GM12878 (cell line): ENCODE measurements at regions of chr2 and their contacts with region 1.

Region 1: GRCh38 chr2:177332041-177332991 is 60.3 kb upstream of the AGPS start:
- DNase-seq: peak; percentile 45
- ATAC-seq: peak; percentile 92
- H3K4me3 ChIP-seq: no peak overlapping the region
- H3K27ac ChIP-seq: no peak overlapping the region
- H3K4me1 ChIP-seq: no peaks in the 10 kb centered on the region
- H3K27me3 ChIP-seq: no peaks in the 10 kb centered on the region
- CTCF ChIP-seq: peak; percentile 55 to 79 (median 62)
- EP300 ChIP-seq: no peak
- POLR2A ChIP-seq: no peak
- RAD21 ChIP-seq: peak; percentile 90

Region 2: GRCh38 chr2:177239932-177240630 is 92.2 kb before region 1 on chr2:
- CTCF ChIA-PET with region 1: interaction called, 6 read pairs
- POLR2A ChIA-PET with region 1: no interaction called
- RAD21 ChIA-PET with region 1: interaction called, 6 read pairs
- SMC1A ChIA-PET with region 1: no interaction called
- in situ Hi-C with region 1: no loop called
- intact Hi-C with region 1: loop called (anchors 5 kb)
- DNase-seq: peak; percentile 47
- ATAC-seq: peak; percentile 86
- H3K4me3 ChIP-seq: no peak overlapping the region
- H3K27ac ChIP-seq: peak overlapping the region; percentile 0; the same call in 1 of the 2 replicates
- H3K4me1 ChIP-seq: peaks cover 22% of the 10 kb centered on the region
- H3K27me3 ChIP-seq: no peaks in the 10 kb centered on the region
- CTCF ChIP-seq: no peak
- EP300 ChIP-seq: no peak
- POLR2A ChIP-seq: no peak
- RAD21 ChIP-seq: no peak

Region 3: DNA sequence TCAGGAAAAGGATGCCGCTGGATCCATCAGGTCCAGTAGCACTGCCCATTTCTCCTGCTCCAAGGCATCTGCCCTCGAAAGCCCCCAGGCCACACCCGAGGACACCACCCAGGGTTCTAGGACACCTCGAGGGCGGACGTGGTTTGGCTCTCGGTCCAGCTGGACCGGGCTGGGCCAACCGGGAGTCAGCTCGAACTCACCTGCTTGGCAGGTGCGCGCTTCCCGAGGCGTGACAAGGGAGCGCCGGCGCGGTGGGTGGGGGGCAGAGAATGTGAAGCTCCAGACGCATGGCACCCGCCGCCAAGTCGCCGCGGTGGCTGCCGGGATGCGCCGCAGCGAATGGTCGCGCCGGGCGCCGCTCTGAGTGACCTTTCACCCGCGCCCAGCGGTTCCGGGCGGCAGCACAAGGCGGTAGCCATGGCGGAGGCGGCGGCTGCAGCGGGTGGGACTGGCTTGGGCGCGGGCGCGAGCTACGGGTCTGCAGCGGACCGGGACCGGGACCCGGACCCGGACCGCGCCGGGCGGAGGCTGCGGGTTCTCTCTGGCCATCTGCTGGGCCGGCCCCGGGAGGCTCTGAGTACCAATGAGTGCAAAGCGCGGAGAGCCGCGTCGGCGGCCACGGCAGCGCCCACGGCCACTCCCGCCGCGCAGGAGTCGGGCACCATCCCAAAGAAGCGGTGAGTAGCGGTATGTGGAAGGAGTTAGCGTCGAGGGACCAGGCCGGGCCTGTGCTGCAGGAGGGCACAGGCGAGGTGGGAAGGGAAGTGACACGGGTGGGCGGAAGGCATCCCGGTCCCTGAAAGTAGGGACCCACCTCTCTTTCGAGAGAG is 60.3 kb after region 1 on chr2 and contains the start of gene AGPS:
- CTCF ChIA-PET with region 1: interaction called, 25 read pairs
- POLR2A ChIA-PET with region 1: interaction called, 3 read pairs
- RAD21 ChIA-PET with region 1: interaction called, 6 read pairs
- SMC1A ChIA-PET with region 1: interaction called, 37 read pairs
- in situ Hi-C with region 1: no loop called
- intact Hi-C with region 1: no loop called
- DNase-seq: peak; percentile 30
- ATAC-seq: peak; percentile 92
- H3K4me3 ChIP-seq: peak within 1 kb of the TSS; percentile 91
- H3K27ac ChIP-seq: peak within 1 kb of the TSS; percentile 66
- H3K4me1 ChIP-seq: peaks cover 20% of the 10 kb centered on the region
- H3K27me3 ChIP-seq: no peaks in the 10 kb centered on the region
- CTCF ChIP-seq: no peak
- EP300 ChIP-seq: no peak
- POLR2A ChIP-seq: peak; percentile 94
- RAD21 ChIP-seq: no peak
- polyA plus RNA-seq, gene AGPS: 7.9 to 11.1 TPM

Region 4: GRCh38 chr2:177413703-177414102 is 81.4 kb after region 1 on chr2:
- CTCF ChIA-PET with region 1: interaction called, 273 read pairs
- POLR2A ChIA-PET with region 1: no interaction called
- RAD21 ChIA-PET with region 1: interaction called, 100 read pairs
- SMC1A ChIA-PET with region 1: interaction called, 208 read pairs
- in situ Hi-C with region 1: loop called (anchors 5 kb)
- intact Hi-C with region 1: loop called (anchors 1 kb)
- DNase-seq: no peak
- ATAC-seq: peak; percentile 69
- H3K4me3 ChIP-seq: no peak overlapping the region
- H3K27ac ChIP-seq: no peak overlapping the region
- H3K4me1 ChIP-seq: no peaks in the 10 kb centered on the region
- H3K27me3 ChIP-seq: no peaks in the 10 kb centered on the region
- CTCF ChIP-seq: no peak
- EP300 ChIP-seq: no peak
- POLR2A ChIP-seq: no peak
- RAD21 ChIP-seq: no peak

Region 5: GRCh38 chr2:177604271-177605065 is 272.2 kb after region 1 on chr2:
- CTCF ChIA-PET with region 1: interaction called, 55 read pairs
- POLR2A ChIA-PET with region 1: no interaction called
- RAD21 ChIA-PET with region 1: interaction called, 9 read pairs
- SMC1A ChIA-PET with region 1: interaction called, 29 read pairs
- in situ Hi-C with region 1: no loop called
- intact Hi-C with region 1: loop called (anchors 2 kb)
- DNase-seq: no peak
- ATAC-seq: peak; percentile 58
- H3K4me3 ChIP-seq: no peak overlapping the region
- H3K27ac ChIP-seq: no peak overlapping the region
- H3K4me1 ChIP-seq: no peaks in the 10 kb centered on the region
- H3K27me3 ChIP-seq: no peaks in the 10 kb centered on the region
- CTCF ChIP-seq: peak; percentile 58 to 63 (median 59); a peak in 5 of 6 replicates
- EP300 ChIP-seq: no peak
- POLR2A ChIP-seq: no peak
- RAD21 ChIP-seq: peak; percentile 63